MCF 10A (cell line): ENCODE measurements at regions of chr20 and their contacts with region 1.

Region 1: DNA sequence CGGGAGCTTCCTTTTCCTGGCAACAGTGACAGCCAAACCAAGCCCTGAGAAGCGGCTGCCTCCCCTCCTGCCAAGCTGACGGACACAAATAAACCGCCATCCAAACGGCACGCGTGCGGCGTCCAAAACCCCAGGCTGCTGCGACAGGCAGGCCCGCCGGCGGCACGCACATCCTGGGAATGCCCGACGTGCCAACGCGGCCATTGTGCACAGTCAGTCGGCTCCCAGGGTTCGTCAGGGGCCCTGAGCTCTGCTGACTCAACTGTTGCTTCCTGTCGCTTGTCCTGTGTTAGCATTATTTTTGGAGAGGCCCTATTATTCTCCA is 6.8 kb downstream of the JAG1 start:
- DNase-seq: peak; percentile 78
- H3K4me3 Mint-ChIP-seq: peak overlapping the region; percentile 33
- H3K27ac Mint-ChIP-seq: peak overlapping the region; percentile 68
- H3K4me1 Mint-ChIP-seq: peaks cover 46% of the 10 kb centered on the region
- H3K27me3 Mint-ChIP-seq: no peaks in the 10 kb centered on the region
- CTCF ChIP-seq: no peak

Region 2: GRCh38 chr20:10469599-10469998 is 197.4 kb before region 1 on chr20:
- CTCF ChIA-PET with region 1: interaction called, 8 read pairs
- POLR2A ChIA-PET with region 1: no interaction called
- intact Hi-C with region 1: loop called (anchors 1 kb)
- DNase-seq: peak; percentile 81
- H3K4me3 Mint-ChIP-seq: no peak overlapping the region
- H3K27ac Mint-ChIP-seq: peak overlapping the region; percentile 59
- H3K4me1 Mint-ChIP-seq: peaks cover 13% of the 10 kb centered on the region
- H3K27me3 Mint-ChIP-seq: no peaks in the 10 kb centered on the region
- CTCF ChIP-seq: peak; percentile 61